Heart right ventricle (tissue), 16 donors: ENCODE measurements at regions of chr7 and their contacts with region 1.

Region 1: DNA sequence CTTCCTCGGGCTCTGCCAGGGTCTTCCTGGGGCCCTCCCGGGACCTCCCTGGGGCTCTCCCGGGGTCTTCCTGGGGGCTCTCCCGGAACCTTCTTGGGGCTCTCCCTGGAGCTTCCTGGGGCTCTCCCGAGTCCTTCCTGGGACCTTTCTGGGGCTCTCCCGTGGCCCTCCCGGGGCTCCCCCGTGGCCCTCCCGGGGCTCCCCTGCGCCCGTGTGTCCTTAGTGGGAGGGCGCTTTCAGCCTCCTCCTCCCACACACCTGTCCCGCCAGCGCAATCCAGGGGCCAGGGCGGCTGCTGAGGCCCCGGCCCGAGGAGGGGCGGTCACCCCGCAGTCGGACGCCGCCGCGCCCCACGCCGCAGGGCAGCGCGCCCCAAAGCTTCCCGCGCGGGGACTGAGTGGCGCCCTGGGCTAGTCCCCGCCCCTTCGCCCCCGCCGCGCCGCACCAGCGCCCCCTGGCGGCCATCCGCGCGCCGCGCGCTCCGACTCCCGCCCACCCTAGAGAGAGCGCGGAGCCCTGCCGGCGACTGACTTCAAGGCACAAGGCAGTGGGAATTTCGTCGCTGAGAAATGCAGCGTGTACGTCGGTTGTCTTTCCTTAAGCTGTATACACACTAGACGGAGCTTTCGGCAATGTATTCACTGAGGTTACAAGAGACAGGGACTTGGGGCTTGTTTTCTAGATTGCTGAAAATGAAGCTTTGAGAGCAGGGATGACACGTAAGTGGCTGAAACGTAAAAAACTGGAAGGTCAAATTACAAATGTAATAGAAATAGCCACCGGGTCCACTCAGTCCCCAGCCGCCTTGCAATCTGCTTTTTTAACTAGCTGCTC is 47.1 kb downstream of the INSIG1 start:
- DNase-seq: peak; percentile 65 to 84
- ATAC-seq: peak; percentile 88 to 97 (median 96)
- H3K4me3 ChIP-seq: peak overlapping the region in 9 of 10 donors; percentile 24 to 50 (median 40)
- H3K27ac ChIP-seq: peak overlapping the region in 1 of 10 donors; percentile 15
- H3K4me1 ChIP-seq: peaks cover 0 to 11% (median 8%) of the 10 kb centered on the region in 9 donors
- H3K27me3 ChIP-seq: peaks cover 0 to 30% (median 17%) of the 10 kb centered on the region in 7 donors
- CTCF ChIP-seq: peak; percentile 78 to 95 (median 87)

Region 2: DNA sequence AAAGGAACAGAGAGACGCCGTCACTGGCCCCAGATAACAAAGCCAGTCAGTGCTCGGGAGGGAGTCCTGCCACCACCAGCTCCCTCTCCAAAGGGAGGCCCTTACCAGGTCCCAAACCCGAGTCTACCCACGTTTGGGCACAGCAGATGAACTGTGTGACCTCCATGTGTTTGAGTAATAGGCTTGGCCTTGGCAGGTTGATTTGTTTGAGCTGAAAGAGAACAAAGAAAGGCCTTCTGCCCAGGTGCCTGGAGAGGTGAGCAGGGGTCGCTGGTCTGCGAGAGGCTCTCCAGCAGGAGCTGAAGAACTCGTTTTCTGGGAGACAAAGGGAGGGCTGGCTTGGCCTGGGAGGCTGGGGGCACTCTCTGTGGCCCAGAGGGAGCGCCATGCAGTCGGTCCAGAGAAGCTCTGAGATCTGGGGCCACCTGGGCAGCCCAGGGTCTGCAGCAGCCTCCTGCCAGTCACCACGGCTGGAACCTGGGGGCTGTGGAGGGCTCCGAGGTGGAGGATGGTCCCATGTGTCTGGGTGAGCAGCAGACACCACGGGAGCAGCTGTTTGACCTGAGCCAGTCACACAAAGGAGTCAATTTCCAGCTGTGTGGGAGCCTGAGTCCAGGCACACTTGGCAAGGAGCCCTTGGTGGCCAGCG is 441.6 kb before region 1 on chr7:
- intact Hi-C with region 1: no loop called
- DNase-seq: no peak
- ATAC-seq: no peak
- H3K4me3 ChIP-seq: no peak overlapping the region
- H3K27ac ChIP-seq: no peak overlapping the region
- H3K4me1 ChIP-seq: no peaks in the 10 kb centered on the region
- H3K27me3 ChIP-seq: peaks cover 0 to 17% (median 0%) of the 10 kb centered on the region in 7 donors
- CTCF ChIP-seq: no peak

Region 3: DNA sequence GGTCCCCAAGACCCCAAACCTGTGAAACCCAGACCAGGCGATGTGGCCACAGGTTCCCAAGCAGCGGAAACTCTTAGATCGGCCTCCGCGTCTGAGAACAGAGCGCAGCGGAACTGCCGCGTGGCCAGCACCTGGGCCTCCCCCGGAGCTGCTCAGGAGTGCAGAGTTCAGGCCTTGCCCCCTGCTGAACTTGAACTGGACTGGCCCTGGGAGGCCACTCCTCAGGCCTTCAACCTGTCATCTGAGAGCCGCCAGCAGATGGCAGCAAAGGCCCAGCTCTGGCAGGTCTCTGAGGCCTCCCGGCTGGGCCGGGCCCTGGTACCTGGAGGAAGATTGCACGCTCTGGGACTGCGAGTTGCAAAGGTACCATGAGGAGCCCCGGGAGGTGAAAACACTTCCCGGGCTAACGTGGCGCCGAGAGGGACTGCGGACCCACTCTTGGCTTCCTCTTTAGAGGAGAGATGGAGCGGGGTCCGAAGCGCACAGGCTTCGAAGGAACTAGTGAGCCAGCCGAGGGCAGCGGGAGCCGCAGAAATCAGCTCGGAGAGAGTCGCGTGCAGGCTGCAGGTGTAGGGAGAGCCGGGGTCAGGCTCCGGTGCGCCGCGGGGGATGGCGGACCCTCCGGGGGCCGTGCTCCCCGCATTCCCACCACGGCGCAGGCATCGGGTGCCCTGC is 431.0 kb before region 1 on chr7:
- intact Hi-C with region 1: loop called in 1 of 10 experiments (anchors 5 kb)
- DNase-seq: peak; percentile 82 to 90
- ATAC-seq: peak; percentile 89 to 96 (median 92)
- H3K4me3 ChIP-seq: peak overlapping the region; percentile 18 to 55 (median 47)
- H3K27ac ChIP-seq: no peak overlapping the region
- H3K4me1 ChIP-seq: peaks cover 0 to 12% (median 10%) of the 10 kb centered on the region in 9 donors
- H3K27me3 ChIP-seq: peaks cover 0 to 58% (median 37%) of the 10 kb centered on the region in 7 donors
- CTCF ChIP-seq: peak; percentile 78 to 97 (median 92)

Region 4: GRCh38 chr7:154919344-154920225 is 425.2 kb before region 1 on chr7:
- intact Hi-C with region 1: loop called in 4 of 10 experiments (anchors 5 to 10 kb)
- DNase-seq: no peak
- ATAC-seq: no peak
- H3K4me3 ChIP-seq: no peak overlapping the region
- H3K27ac ChIP-seq: no peak overlapping the region
- H3K4me1 ChIP-seq: peaks cover 0 to 2% (median 1%) of the 10 kb centered on the region in 9 donors
- H3K27me3 ChIP-seq: peaks cover 0 to 34% (median 22%) of the 10 kb centered on the region in 7 donors
- CTCF ChIP-seq: no peak

Region 5: DNA sequence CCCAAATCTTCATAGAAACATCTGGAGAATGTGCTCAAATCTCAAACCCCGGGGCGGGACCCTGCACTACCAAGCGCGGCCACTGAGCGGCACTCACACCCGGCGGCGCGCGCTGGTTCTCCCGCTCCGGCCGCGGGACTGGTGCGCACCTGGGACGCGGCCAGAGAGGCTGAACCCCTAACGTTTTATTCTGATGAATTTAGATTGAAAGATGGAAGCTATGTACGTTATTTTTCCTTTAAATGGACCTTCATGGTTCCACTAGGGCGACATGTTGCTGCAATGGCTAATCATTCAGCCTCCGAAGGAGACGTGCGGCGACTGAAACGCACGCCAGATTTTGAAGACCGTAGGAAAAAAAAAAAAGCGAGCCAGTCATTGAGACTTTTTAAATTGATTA is 154.1 kb before region 1 on chr7:
- intact Hi-C with region 1: loop called (anchors 1 to 5 kb)
- DNase-seq: peak; percentile 35 to 59
- ATAC-seq: peak in 7 of 8 donors; percentile 63 to 81 (median 67)
- H3K4me3 ChIP-seq: peak overlapping the region in 3 of 10 donors; percentile 5 to 18 (median 15)
- H3K27ac ChIP-seq: no peak overlapping the region
- H3K4me1 ChIP-seq: peaks cover 0 to 4% (median 2%) of the 10 kb centered on the region in 9 donors
- H3K27me3 ChIP-seq: peaks cover 0 to 42% (median 13%) of the 10 kb centered on the region in 7 donors
- CTCF ChIP-seq: peak; percentile 77 to 88 (median 83)